Activated B cell treated with CpG ODN at 0.5 μM for 24 hours (primary cell): ENCODE measurements at regions of chr17 and their contacts with region 1.

Region 1: GRCh38 chr17:11997147-11997846 is at the start of gene ZNF18:
- DNase-seq: peak; percentile 97
- ATAC-seq: peak; percentile 97
- H3K4me3 Mint-ChIP-seq: peak within 1 kb of the TSS; percentile 93
- H3K27ac Mint-ChIP-seq: peak within 1 kb of the TSS; percentile 81
- H3K4me1 Mint-ChIP-seq: peaks cover 19% of the 10 kb centered on the region
- H3K27me3 Mint-ChIP-seq: no peaks in the 10 kb centered on the region
- CTCF ChIP-seq: no peak
- total RNA-seq, gene ZNF18: 10.1 and 11.8 TPM in 2 replicates

Region 2: GRCh38 chr17:12007466-12007865 is 10.2 kb after region 1 on chr17:
- CTCF ChIA-PET with region 1: no interaction called
- POLR2A ChIA-PET with region 1: interaction called, 13 read pairs
- intact Hi-C with region 1: no loop called
- DNase-seq: no peak
- ATAC-seq: no peak
- H3K4me3 Mint-ChIP-seq: no peak overlapping the region
- H3K27ac Mint-ChIP-seq: no peak overlapping the region
- H3K4me1 Mint-ChIP-seq: no peaks in the 10 kb centered on the region
- H3K27me3 Mint-ChIP-seq: peaks cover 9% of the 10 kb centered on the region
- CTCF ChIP-seq: no peak

Region 3: GRCh38 chr17:12034538-12034937 is 37.2 kb after region 1 on chr17:
- CTCF ChIA-PET with region 1: no interaction called
- POLR2A ChIA-PET with region 1: interaction called, 4 read pairs
- intact Hi-C with region 1: loop called (anchors 5 kb)
- DNase-seq: no peak
- ATAC-seq: no peak
- H3K4me3 Mint-ChIP-seq: no peak overlapping the region
- H3K27ac Mint-ChIP-seq: no peak overlapping the region
- H3K4me1 Mint-ChIP-seq: peaks cover 18% of the 10 kb centered on the region
- H3K27me3 Mint-ChIP-seq: no peaks in the 10 kb centered on the region
- CTCF ChIP-seq: no peak

Region 4: GRCh38 chr17:12098568-12098967 is 101.3 kb after region 1 on chr17:
- CTCF ChIA-PET with region 1: no interaction called
- POLR2A ChIA-PET with region 1: interaction called, 19 read pairs
- intact Hi-C with region 1: loop called (anchors 1 kb)
- DNase-seq: no peak
- ATAC-seq: peak; percentile 100
- H3K4me3 Mint-ChIP-seq: no peak overlapping the region
- H3K27ac Mint-ChIP-seq: no peak overlapping the region
- H3K4me1 Mint-ChIP-seq: peaks cover 15% of the 10 kb centered on the region
- H3K27me3 Mint-ChIP-seq: no peaks in the 10 kb centered on the region
- CTCF ChIP-seq: no peak